ENCODE measurements at regions of chr19 and their contacts with region 1.

Region 1: DNA sequence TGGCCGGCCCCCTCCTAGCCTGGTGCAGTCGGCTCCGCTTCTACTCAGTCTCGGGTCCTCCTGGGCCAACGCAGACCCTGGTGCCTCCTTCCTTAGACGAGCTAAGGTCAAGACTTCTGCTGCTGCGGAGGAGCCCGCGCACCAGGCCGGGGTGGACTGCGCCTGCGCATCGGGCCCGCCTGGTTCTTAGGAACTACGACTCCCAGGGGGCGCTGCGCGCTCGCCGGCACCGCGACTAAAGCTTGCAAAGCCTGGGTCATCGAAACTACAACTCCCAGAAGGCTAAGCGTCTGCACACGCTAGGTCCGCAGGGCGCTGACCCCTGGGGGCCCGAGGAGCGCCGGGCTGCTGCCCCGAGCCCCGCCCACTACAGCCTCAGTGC is at the start of gene ZNF835:
- DNase-seq: peak; percentile 60 to 87 (median 77)
- ATAC-seq: peak; percentile 92
- H3K4me3 ChIP-seq: peak within 1 kb of the TSS; percentile 50
- H3K4me3 Mint-ChIP-seq: peak within 1 kb of the TSS; percentile 87
- H3K27ac ChIP-seq: peak within 1 kb of the TSS in 1 of 2 donors; percentile 25
- H3K27ac Mint-ChIP-seq: peak within 1 kb of the TSS; percentile 65
- H3K4me1 ChIP-seq: peaks cover 15% of the 10 kb centered on the region
- H3K4me1 Mint-ChIP-seq: peaks cover 14% of the 10 kb centered on the region
- H3K27me3 ChIP-seq: no peaks in the 10 kb centered on the region
- H3K27me3 Mint-ChIP-seq: no peaks in the 10 kb centered on the region
- CTCF ChIP-seq: no peak
- total RNA-seq, gene ZNF835: 0.82 to 1.1 TPM

Region 2: GRCh38 chr19:56637976-56638555 is 33.5 kb before region 1 on chr19:
- CTCF ChIA-PET with region 1: no interaction called
- POLR2A ChIA-PET with region 1: no interaction called
- intact Hi-C with region 1: no loop called
- DNase-seq: peak in 4 of 14 experiments; percentile 6 to 38 (median 12)
- ATAC-seq: no peak
- H3K4me3 ChIP-seq: no peak overlapping the region
- H3K4me3 Mint-ChIP-seq: no peak overlapping the region
- H3K27ac ChIP-seq: no peak overlapping the region
- H3K27ac Mint-ChIP-seq: no peak overlapping the region
- H3K4me1 ChIP-seq: no peaks in the 10 kb centered on the region
- H3K4me1 Mint-ChIP-seq: no peaks in the 10 kb centered on the region
- H3K27me3 ChIP-seq: no peaks in the 10 kb centered on the region
- H3K27me3 Mint-ChIP-seq: peaks cover 7% of the 10 kb centered on the region
- CTCF ChIP-seq: no peak

Region 3: DNA sequence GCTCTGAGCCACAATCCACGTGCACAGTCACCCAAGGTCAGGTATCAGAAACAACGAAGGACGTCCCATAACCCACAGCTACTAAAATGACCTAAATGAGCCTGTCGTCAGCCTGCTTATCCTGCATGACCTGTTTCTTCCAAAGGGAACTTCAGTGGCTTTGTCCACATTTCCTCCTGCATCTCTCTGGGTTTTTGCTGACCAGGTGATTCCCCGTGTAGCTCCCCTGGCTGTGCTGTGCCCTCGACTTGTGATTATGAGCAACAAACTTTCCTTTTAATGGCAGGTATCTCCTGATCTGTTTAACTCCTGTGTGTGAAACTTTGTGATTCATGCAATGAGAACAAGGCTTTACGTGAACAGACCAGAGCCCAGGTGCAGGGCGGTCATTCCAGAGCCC is 87.9 kb after region 1 on chr19:
- CTCF ChIA-PET with region 1: no interaction called
- POLR2A ChIA-PET with region 1: no interaction called
- intact Hi-C with region 1: no loop called
- DNase-seq: no peak
- ATAC-seq: no peak
- H3K4me3 ChIP-seq: no peak overlapping the region
- H3K4me3 Mint-ChIP-seq: no peak overlapping the region
- H3K27ac ChIP-seq: no peak overlapping the region
- H3K27ac Mint-ChIP-seq: no peak overlapping the region
- H3K4me1 ChIP-seq: no peaks in the 10 kb centered on the region
- H3K4me1 Mint-ChIP-seq: no peaks in the 10 kb centered on the region
- H3K27me3 ChIP-seq: no peaks in the 10 kb centered on the region
- H3K27me3 Mint-ChIP-seq: peaks cover under 1% of the 10 kb centered on the region
- CTCF ChIP-seq: no peak

Region 4: GRCh38 chr19:58372311-58373133 is 1700.9 kb after region 1 on chr19:
- CTCF ChIA-PET with region 1: no interaction called
- POLR2A ChIA-PET with region 1: no interaction called
- intact Hi-C with region 1: loop called in 1 of 2 experiments (anchors 10 kb)
- DNase-seq: no peak
- ATAC-seq: no peak
- H3K4me3 ChIP-seq: no peak overlapping the region
- H3K4me3 Mint-ChIP-seq: no peak overlapping the region
- H3K27ac ChIP-seq: no peak overlapping the region
- H3K27ac Mint-ChIP-seq: no peak overlapping the region
- H3K4me1 ChIP-seq: no peaks in the 10 kb centered on the region
- H3K4me1 Mint-ChIP-seq: no peaks in the 10 kb centered on the region
- H3K27me3 ChIP-seq: no peaks in the 10 kb centered on the region
- H3K27me3 Mint-ChIP-seq: no peaks in the 10 kb centered on the region
- CTCF ChIP-seq: no peak